ENCODE measurements at regions of chr5 and their contacts with region 1.

Region 1: GRCh38 chr5:149834246-149834855 is 104.2 kb downstream of the PPARGC1B start:
- DNase-seq: peak; percentile 91
- ATAC-seq: peak; percentile 79
- H3K4me3 ChIP-seq: no peak overlapping the region
- H3K27ac ChIP-seq: no peak overlapping the region
- H3K4me1 ChIP-seq: no peaks in the 10 kb centered on the region
- H3K27me3 ChIP-seq: peaks cover 7% of the 10 kb centered on the region; the same call in 1 of the 2 replicates
- CTCF ChIP-seq: peak; percentile 80
- POLR2A ChIP-seq: no peak
- RAD21 ChIP-seq: peak; percentile 86

Region 2: GRCh38 chr5:149852641-149853330 is 18.4 kb after region 1 on chr5:
- CTCF ChIA-PET with region 1: interaction called, 30 read pairs
- POLR2A ChIA-PET with region 1: no interaction called
- dilution Hi-C with region 1: no loop called
- in situ Hi-C with region 1: no loop called
- intact Hi-C with region 1: loop called (anchors 1 kb)
- DNase-seq: peak; percentile 77
- ATAC-seq: peak; percentile 91
- H3K4me3 ChIP-seq: no peak overlapping the region
- H3K27ac ChIP-seq: no peak overlapping the region
- H3K4me1 ChIP-seq: peaks cover 2% of the 10 kb centered on the region; the same call in 1 of the 2 replicates
- H3K27me3 ChIP-seq: peaks cover 44% of the 10 kb centered on the region
- CTCF ChIP-seq: peak; percentile 82
- POLR2A ChIP-seq: no peak
- RAD21 ChIP-seq: peak; percentile 72

Region 3: GRCh38 chr5:149990518-149991376 is 156.4 kb after region 1 on chr5:
- CTCF ChIA-PET with region 1: interaction called, 63 read pairs
- POLR2A ChIA-PET with region 1: no interaction called
- dilution Hi-C with region 1: no loop called
- in situ Hi-C with region 1: loop called (anchors 5 kb)
- intact Hi-C with region 1: loop called (anchors 1 kb)
- DNase-seq: peak; percentile 76
- ATAC-seq: peak; percentile 93
- H3K4me3 ChIP-seq: no peak overlapping the region
- H3K27ac ChIP-seq: no peak overlapping the region
- H3K4me1 ChIP-seq: peaks cover 2% of the 10 kb centered on the region; the same call in 1 of the 2 replicates
- H3K27me3 ChIP-seq: no peaks in the 10 kb centered on the region
- CTCF ChIP-seq: peak; percentile 94
- POLR2A ChIP-seq: no peak
- RAD21 ChIP-seq: peak; percentile 94

Region 4: GRCh38 chr5:150112261-150113046 is 278.1 kb after region 1 on chr5:
- CTCF ChIA-PET with region 1: interaction called, 5 read pairs
- POLR2A ChIA-PET with region 1: no interaction called
- dilution Hi-C with region 1: no loop called
- in situ Hi-C with region 1: no loop called
- intact Hi-C with region 1: loop called (anchors 10 kb)
- DNase-seq: peak; percentile 88
- ATAC-seq: peak; percentile 71
- H3K4me3 ChIP-seq: no peak overlapping the region
- H3K27ac ChIP-seq: peak overlapping the region; percentile 8
- H3K4me1 ChIP-seq: peaks cover 25% of the 10 kb centered on the region
- H3K27me3 ChIP-seq: no peaks in the 10 kb centered on the region
- CTCF ChIP-seq: no peak
- POLR2A ChIP-seq: no peak
- RAD21 ChIP-seq: 0 out of 2 replicates have a peak, but pooled peaks have one; percentile 18

Region 5: GRCh38 chr5:150931368-150931965 is 1097.1 kb after region 1 on chr5:
- CTCF ChIA-PET with region 1: no interaction called
- POLR2A ChIA-PET with region 1: no interaction called
- dilution Hi-C with region 1: no loop called
- in situ Hi-C with region 1: no loop called
- intact Hi-C with region 1: no loop called
- DNase-seq: no peak
- ATAC-seq: no peak
- H3K4me3 ChIP-seq: no peak overlapping the region
- H3K27ac ChIP-seq: no peak overlapping the region
- H3K4me1 ChIP-seq: no peaks in the 10 kb centered on the region
- H3K27me3 ChIP-seq: no peaks in the 10 kb centered on the region
- CTCF ChIP-seq: no peak
- POLR2A ChIP-seq: no peak
- RAD21 ChIP-seq: no peak

Measured in IMR-90 (cell line).